ENCODE measurements at regions of chr1 and their contacts with region 1.

Region 1: GRCh38 chr1:44036409-44037139 is 5.3 kb upstream of the SLC6A9 start:
- DNase-seq: peak; percentile 67 to 75 (median 70)
- ATAC-seq: peak; percentile 88 to 95 (median 89)
- H3K4me3 ChIP-seq: no peak overlapping the region
- H3K27ac ChIP-seq: no peak overlapping the region
- H3K4me1 ChIP-seq: no peaks in the 10 kb centered on the region
- H3K27me3 ChIP-seq: no peaks in the 10 kb centered on the region
- CTCF ChIP-seq: peak; percentile 79 to 86 (median 82)
- POLR2A ChIP-seq: no peak

Region 2: DNA sequence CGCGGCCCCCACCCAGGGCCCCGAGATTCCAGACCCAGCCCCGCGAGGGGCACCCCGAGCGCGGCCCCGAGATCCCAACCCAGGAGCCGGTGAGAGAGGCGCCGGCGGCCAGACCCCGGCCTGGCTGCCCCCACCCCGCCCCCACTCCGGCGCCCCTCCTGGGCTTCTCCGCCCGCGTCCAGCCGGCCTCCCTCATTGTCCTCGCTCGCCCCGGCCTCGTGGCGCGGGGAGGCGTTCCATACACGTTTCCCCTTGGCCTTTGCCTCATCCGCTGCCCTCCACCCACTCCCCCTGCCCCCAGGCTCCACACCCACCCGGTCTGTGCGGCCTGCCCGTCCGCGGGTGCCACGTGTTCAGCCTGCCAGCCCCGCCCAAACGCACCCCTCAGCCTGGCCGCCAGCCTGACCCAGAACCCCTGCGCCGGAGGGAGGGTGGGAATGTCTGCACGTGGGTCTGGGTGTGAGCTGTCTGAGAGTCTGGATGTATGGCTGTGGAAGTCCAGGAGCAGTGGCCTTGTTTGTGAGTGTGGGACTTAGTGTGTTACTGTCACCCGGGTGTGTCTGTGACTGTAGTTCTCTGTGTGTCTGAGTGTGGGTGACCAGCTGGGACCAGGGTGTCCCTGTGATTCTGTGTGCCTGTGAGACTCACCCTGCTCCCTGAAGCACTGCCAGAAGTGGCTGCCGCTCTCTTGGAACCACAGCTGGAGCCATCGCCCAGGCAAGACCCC is 56.9 kb before region 1 on chr1:
- intact Hi-C with region 1: no loop called
- DNase-seq: peak in 2 of 3 donors; percentile 61 to 67
- ATAC-seq: peak in 3 of 4 donors; percentile 14 to 34 (median 28)
- H3K4me3 ChIP-seq: peak overlapping the region; percentile 70 to 71 (median 70)
- H3K27ac ChIP-seq: peak overlapping the region in 1 of 3 donors; percentile 6
- H3K4me1 ChIP-seq: peaks cover 0 to 39% (median 13%) of the 10 kb centered on the region in 4 donors
- H3K27me3 ChIP-seq: no peaks in the 10 kb centered on the region
- CTCF ChIP-seq: no peak
- POLR2A ChIP-seq: no peak

Region 3: GRCh38 chr1:44002606-44003157 is 33.9 kb before region 1 on chr1:
- intact Hi-C with region 1: loop called (anchors 5 kb)
- DNase-seq: no peak
- ATAC-seq: no peak
- H3K4me3 ChIP-seq: no peak overlapping the region
- H3K27ac ChIP-seq: no peak overlapping the region
- H3K4me1 ChIP-seq: no peaks in the 10 kb centered on the region
- H3K27me3 ChIP-seq: no peaks in the 10 kb centered on the region
- CTCF ChIP-seq: no peak
- POLR2A ChIP-seq: no peak

Measured in right lobe of liver (tissue), 6 donors.